ENCODE measurements at regions of chr1 and their contacts with region 1.

Region 1: GRCh38 chr1:183915625-183916510 is 110.9 kb downstream of the RGL1 start:
- DNase-seq: peak; percentile 82
- H3K4me3 ChIP-seq: no peak overlapping the region
- H3K27ac ChIP-seq: no peak overlapping the region
- H3K4me1 ChIP-seq: peaks cover 19% of the 10 kb centered on the region
- CTCF ChIP-seq: peak; percentile 91

Region 2: DNA sequence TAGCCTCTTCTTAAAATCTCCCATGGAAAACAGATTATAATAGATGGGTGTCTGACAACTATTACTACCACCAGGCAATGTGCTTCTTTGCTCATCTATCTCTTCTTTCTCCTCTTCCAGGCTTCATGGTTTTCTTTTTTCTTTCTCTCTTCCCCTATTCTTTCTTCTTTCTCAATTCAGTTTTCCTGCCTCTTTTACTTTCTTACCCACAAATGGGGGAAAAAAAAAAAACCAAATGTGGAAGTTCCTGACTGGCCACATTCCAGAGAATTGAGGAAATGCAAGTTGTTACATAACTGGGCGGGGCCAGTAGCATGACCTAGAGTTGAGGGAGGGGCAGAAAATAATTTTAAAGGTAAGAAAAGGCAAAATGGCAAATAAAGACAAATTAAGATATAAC is 454.5 kb before region 1 on chr1:
- CTCF ChIA-PET with region 1: no interaction called
- POLR2A ChIA-PET with region 1: no interaction called
- intact Hi-C with region 1: loop called (anchors 5 kb)
- DNase-seq: no peak
- H3K4me3 ChIP-seq: no peak overlapping the region
- H3K27ac ChIP-seq: no peak overlapping the region
- H3K4me1 ChIP-seq: no peaks in the 10 kb centered on the region
- CTCF ChIP-seq: no peak

Region 3: GRCh38 chr1:183655562-183656075 is 260.2 kb before region 1 on chr1:
- CTCF ChIA-PET with region 1: interaction called, 6 read pairs
- POLR2A ChIA-PET with region 1: interaction called, 3 read pairs
- intact Hi-C with region 1: loop called (anchors 1 kb)
- DNase-seq: peak; percentile 74
- H3K4me3 ChIP-seq: no peak overlapping the region
- H3K27ac ChIP-seq: no peak overlapping the region
- H3K4me1 ChIP-seq: no peaks in the 10 kb centered on the region
- CTCF ChIP-seq: peak; percentile 97

Region 4: DNA sequence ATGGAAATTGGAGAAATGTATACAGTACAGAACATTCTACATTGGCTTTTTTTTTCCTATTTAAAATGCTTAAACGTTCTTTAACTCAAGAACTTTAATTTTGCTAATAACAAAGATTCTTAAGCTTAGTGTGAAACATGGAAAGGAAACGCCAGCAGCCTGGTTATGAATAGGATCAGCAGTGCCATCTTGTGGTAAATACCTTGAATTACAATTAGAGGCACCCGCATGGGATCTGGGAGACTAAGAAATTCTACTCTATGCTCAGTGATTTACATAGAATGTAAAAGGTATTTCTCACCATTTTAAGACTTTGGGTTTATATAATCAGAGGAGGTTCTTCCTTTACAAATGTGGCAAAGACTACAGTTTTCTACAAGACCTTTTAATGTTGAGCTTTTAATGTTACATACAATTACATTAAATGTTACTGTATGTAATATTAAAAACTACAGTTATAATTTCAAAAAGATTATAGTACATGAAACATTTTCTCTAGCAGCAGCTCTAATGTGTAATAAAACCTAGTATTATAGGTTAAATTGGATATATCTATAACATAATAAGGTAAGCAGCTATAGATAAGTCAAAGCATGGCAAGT is 230.7 kb before region 1 on chr1:
- CTCF ChIA-PET with region 1: no interaction called
- POLR2A ChIA-PET with region 1: no interaction called
- intact Hi-C with region 1: loop called (anchors 1 kb)
- DNase-seq: peak; percentile 69
- H3K4me3 ChIP-seq: no peak overlapping the region
- H3K27ac ChIP-seq: no peak overlapping the region
- H3K4me1 ChIP-seq: no peaks in the 10 kb centered on the region
- CTCF ChIP-seq: peak; percentile 96

Region 5: DNA sequence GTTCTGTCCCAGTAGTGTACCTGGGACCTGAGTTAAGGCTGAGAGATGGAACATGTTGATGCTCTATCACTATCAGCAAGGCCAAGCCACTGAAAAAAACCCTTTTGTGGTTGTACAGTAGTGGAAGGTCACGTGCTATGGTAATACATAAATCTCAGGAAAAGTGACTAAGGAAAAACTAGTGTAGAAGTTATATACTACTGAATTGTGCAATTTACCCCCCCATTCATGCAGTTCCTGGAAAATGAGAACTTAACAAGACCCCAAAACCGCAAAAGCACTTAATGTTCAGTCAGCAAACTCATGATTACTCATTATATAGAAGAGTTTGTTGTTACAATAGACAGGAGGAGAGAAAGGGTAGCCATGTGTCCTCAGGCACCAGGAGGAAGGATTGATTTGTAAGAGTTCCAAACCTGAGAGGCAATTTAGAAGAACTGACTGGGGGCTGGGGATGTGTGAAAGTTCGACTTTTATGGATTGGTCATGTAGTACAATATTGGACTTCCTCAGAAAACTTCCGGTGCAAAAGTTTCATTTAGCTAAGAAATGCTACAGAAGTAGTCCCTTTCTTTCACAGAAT is 19.3 kb before region 1 on chr1:
- CTCF ChIA-PET with region 1: no interaction called
- POLR2A ChIA-PET with region 1: interaction called, 3 read pairs
- intact Hi-C with region 1: loop called (anchors 1 kb)
- DNase-seq: no peak
- H3K4me3 ChIP-seq: no peak overlapping the region
- H3K27ac ChIP-seq: no peak overlapping the region
- H3K4me1 ChIP-seq: no peaks in the 10 kb centered on the region
- CTCF ChIP-seq: no peak

Region 6: GRCh38 chr1:183989078-183989577 is 73.3 kb after region 1 on chr1:
- CTCF ChIA-PET with region 1: no interaction called
- POLR2A ChIA-PET with region 1: no interaction called
- intact Hi-C with region 1: no loop called
- DNase-seq: no peak
- H3K4me3 ChIP-seq: no peak overlapping the region
- H3K27ac ChIP-seq: no peak overlapping the region
- H3K4me1 ChIP-seq: no peaks in the 10 kb centered on the region
- CTCF ChIP-seq: no peak

Measured in OCI-LY7 (cell line).